Activated naive CD4-positive, alpha-beta T cell treated with anti-CD3 and anti-CD28 coated beads for 36 hours (primary cell): ENCODE measurements at regions of chr2 and their contacts with region 1.

Region 1: DNA sequence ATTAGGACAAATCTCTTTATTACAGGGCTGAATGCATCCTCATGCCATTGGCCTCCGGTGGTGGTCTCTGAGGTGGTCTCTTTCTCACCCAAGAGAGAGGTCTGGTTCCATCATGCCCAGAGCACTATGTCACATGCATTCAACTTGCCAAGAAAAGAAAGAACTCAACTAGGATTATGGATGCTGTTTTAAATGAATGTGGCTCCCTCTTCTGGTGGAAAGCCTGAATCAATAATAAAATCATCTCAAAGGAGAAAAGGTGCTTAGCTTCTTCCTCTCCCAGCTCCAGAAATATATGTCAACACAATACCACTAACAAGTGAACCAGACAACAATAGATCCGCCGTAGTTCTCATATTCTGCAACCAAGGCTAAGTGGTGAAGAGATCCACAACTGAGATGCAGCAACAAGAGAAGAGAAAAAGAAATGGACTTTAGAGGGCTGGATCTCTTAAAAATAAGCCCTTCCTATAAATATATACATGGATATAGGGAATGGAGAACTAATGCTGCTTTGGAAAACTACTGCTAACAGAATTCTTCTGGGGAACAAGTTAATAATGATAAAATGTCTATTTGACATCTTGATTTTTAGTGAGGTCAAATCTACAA is 396.8 kb downstream of the NCKAP5 start:
- DNase-seq: no peak
- H3K4me3 Mint-ChIP-seq: no peak overlapping the region
- H3K27ac Mint-ChIP-seq: no peak overlapping the region
- H3K4me1 Mint-ChIP-seq: no peaks in the 10 kb centered on the region
- H3K27me3 Mint-ChIP-seq: no peaks in the 10 kb centered on the region

Region 2: DNA sequence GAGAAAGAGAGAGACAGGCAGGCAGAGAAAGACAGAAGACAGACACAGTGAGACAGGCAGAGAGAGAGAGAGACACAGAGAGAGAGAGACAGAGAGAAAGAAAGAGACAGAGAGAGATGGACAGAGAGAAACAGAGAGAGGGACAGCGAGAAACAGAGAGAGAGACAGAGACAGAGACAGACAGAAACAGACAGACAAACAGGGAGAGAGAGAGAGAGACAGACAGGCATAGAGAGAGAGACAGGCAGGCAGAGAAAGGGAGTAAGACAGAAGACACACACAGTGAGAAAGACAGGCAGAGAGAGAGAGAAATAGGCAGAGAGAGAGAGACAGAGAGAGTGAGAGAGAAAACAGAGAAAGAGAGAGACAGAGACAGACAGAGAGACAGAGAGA is 904.4 kb before region 1 on chr2:
- CTCF ChIA-PET with region 1: no interaction called
- intact Hi-C with region 1: loop called (anchors 1 kb)
- DNase-seq: no peak
- H3K4me3 Mint-ChIP-seq: no peak overlapping the region
- H3K27ac Mint-ChIP-seq: no peak overlapping the region
- H3K4me1 Mint-ChIP-seq: peaks cover 3% of the 10 kb centered on the region
- H3K27me3 Mint-ChIP-seq: peaks cover 9% of the 10 kb centered on the region

Region 3: GRCh38 chr2:133146895-133147294 is 24.6 kb before region 1 on chr2:
- CTCF ChIA-PET with region 1: no interaction called
- intact Hi-C with region 1: no loop called
- DNase-seq: no peak
- H3K4me3 Mint-ChIP-seq: no peak overlapping the region
- H3K27ac Mint-ChIP-seq: no peak overlapping the region
- H3K4me1 Mint-ChIP-seq: no peaks in the 10 kb centered on the region
- H3K27me3 Mint-ChIP-seq: no peaks in the 10 kb centered on the region

Region 4: DNA sequence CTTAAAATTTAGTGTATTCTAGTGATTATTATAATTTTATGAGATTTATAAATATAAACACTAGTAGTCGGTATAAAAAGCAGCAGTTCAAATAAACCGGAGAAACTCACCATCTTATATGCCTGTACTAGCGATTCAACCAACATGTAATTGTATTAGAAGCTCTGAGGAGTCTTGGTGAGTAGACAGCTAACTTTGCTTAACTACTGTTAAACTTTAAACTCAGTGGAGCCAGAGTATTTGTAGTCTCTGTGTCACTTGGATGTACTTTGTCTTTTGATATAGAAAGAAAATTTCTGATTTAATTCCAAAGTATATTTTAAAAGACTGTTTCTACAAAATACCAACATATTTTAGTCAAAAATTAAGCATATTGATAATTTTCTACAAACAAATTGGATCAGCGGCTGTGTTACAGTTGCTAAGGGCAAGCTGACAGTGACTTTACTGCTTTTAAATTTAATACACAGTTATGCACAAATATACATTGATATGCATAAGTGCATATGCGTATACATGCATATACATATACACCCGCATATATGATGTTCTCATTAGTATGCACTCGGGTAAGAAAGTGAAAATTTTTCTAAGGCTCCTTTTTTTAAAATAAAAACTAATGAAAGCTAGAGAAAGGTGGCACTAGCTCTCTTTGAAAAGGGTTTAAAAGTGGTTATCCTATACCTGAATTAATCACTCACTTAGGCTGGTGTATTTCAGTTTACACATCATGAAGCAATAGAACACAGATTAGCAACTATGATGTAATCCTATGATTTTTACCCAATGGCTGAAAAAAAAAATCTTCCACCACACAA is 22.3 kb after region 1 on chr2:
- CTCF ChIA-PET with region 1: no interaction called
- intact Hi-C with region 1: no loop called
- DNase-seq: no peak
- H3K4me3 Mint-ChIP-seq: no peak overlapping the region
- H3K27ac Mint-ChIP-seq: no peak overlapping the region
- H3K4me1 Mint-ChIP-seq: no peaks in the 10 kb centered on the region
- H3K27me3 Mint-ChIP-seq: no peaks in the 10 kb centered on the region

Region 5: GRCh38 chr2:133886735-133887660 is 715.5 kb after region 1 on chr2:
- CTCF ChIA-PET with region 1: no interaction called
- intact Hi-C with region 1: no loop called
- DNase-seq: peak; percentile 66
- H3K4me3 Mint-ChIP-seq: no peak overlapping the region
- H3K27ac Mint-ChIP-seq: no peak overlapping the region
- H3K4me1 Mint-ChIP-seq: no peaks in the 10 kb centered on the region
- H3K27me3 Mint-ChIP-seq: peaks cover 5% of the 10 kb centered on the region